ENCODE measurements at regions of chr10 and their contacts with region 1.

Region 1: DNA sequence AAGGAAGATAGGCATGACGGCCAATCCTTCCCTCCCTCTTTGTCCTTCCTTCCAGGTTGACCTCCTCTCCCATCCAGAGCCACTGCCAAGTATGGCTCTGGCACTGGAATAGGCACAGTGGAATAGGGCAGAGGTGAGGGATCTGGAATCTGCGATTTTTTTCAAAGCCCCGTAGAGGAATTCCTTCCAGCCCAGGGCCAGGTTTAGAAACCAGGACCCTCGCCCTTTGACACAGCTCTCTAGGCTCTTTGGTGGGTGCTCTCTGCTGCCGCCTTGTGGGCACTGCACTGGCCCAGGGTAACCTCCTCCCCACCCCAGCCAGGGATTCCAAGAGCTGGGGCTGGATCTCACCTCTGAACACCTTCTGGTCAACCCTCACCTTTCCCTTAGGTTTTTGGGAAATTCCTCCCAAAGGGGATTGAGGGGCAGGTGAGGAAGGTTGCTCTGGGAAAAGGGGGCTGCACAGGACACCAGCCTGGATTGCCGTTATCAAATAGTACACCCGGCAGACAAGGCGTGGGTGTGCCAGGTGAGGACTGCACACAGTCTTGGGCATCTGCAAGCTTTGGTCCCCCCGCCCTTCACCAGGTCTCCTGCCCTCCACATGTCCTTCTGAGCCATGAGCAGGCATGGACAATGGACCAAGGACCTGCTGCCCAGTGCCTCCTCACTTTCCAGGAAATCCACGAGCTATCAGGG is 22.8 kb downstream of the C10orf105 start:
- DNase-seq: peak; percentile 91
- ATAC-seq: peak; percentile 97
- H3K4me3 Mint-ChIP-seq: no peak overlapping the region
- H3K27ac Mint-ChIP-seq: no peak overlapping the region
- H3K4me1 Mint-ChIP-seq: no peaks in the 10 kb centered on the region
- H3K27me3 Mint-ChIP-seq: no peaks in the 10 kb centered on the region; the same call in 1 of the 2 replicates
- CTCF ChIP-seq: peak; percentile 83

Region 2: DNA sequence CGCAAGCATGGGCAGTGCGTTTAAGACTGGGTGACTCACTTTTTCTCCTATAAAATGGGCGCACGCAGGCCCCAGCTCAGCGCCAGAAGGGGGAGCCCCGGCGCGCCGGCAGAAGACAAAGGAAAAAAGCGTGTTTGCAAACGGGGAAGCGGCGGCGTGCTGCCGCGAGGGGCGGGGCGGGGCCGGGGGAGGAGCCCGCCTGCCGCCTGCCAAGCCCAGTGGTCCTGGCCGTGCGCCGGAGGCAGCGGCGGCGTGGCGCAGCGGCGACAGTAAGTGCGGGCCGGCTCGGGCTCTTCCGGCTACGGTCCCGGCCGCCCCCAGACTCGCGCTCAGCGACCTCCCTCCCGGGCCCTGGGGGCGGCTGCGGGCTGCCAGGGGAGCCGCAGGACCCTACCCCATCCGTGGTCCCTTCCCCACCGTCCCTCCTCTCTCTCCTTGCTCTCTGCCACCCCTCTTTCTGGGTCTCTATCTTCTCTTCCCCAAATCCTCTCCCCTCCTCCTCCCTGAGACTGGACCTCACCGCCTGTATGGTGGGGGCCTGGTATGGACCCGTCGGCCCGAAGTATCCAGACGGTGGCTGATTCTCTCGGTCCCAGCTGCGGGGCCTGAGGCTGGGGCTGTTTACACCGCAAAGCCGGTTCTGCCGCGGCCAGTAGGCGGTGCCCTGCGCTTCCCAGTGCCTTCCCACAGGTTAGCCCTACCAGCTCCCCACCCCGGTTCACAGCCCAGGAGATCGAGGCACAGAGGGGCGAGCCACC is 377.6 kb before region 1 on chr10 and contains the start of gene SLC29A3:
- CTCF ChIA-PET with region 1: interaction called, 34 read pairs
- POLR2A ChIA-PET with region 1: no interaction called
- DNase-seq: peak; percentile 85
- ATAC-seq: peak; percentile 90
- H3K4me3 Mint-ChIP-seq: peak within 1 kb of the TSS; percentile 98
- H3K27ac Mint-ChIP-seq: peak within 1 kb of the TSS; percentile 93
- H3K4me1 Mint-ChIP-seq: peaks cover 18% of the 10 kb centered on the region
- H3K27me3 Mint-ChIP-seq: no peaks in the 10 kb centered on the region
- CTCF ChIP-seq: peak; percentile 38
- total RNA-seq, gene SLC29A3: 9.2 to 11.1 TPM (median 11.0 TPM) in 3 replicates

Region 3: GRCh38 chr10:71486484-71487114 is 210.2 kb before region 1 on chr10:
- CTCF ChIA-PET with region 1: interaction called, 11 read pairs
- POLR2A ChIA-PET with region 1: no interaction called
- DNase-seq: peak; percentile 90
- ATAC-seq: peak; percentile 93
- H3K4me3 Mint-ChIP-seq: no peak overlapping the region
- H3K27ac Mint-ChIP-seq: no peak overlapping the region
- H3K4me1 Mint-ChIP-seq: peaks cover 3% of the 10 kb centered on the region; the same call in 1 of the 2 replicates
- H3K27me3 Mint-ChIP-seq: peaks cover 11% of the 10 kb centered on the region
- CTCF ChIP-seq: peak; percentile 82

Region 4: GRCh38 chr10:71547312-71547711 is 149.5 kb before region 1 on chr10:
- CTCF ChIA-PET with region 1: no interaction called
- POLR2A ChIA-PET with region 1: no interaction called
- DNase-seq: no peak
- ATAC-seq: no peak
- H3K4me3 Mint-ChIP-seq: no peak overlapping the region
- H3K27ac Mint-ChIP-seq: no peak overlapping the region
- H3K4me1 Mint-ChIP-seq: peaks cover 57% of the 10 kb centered on the region
- H3K27me3 Mint-ChIP-seq: no peaks in the 10 kb centered on the region
- CTCF ChIP-seq: no peak

Region 5: DNA sequence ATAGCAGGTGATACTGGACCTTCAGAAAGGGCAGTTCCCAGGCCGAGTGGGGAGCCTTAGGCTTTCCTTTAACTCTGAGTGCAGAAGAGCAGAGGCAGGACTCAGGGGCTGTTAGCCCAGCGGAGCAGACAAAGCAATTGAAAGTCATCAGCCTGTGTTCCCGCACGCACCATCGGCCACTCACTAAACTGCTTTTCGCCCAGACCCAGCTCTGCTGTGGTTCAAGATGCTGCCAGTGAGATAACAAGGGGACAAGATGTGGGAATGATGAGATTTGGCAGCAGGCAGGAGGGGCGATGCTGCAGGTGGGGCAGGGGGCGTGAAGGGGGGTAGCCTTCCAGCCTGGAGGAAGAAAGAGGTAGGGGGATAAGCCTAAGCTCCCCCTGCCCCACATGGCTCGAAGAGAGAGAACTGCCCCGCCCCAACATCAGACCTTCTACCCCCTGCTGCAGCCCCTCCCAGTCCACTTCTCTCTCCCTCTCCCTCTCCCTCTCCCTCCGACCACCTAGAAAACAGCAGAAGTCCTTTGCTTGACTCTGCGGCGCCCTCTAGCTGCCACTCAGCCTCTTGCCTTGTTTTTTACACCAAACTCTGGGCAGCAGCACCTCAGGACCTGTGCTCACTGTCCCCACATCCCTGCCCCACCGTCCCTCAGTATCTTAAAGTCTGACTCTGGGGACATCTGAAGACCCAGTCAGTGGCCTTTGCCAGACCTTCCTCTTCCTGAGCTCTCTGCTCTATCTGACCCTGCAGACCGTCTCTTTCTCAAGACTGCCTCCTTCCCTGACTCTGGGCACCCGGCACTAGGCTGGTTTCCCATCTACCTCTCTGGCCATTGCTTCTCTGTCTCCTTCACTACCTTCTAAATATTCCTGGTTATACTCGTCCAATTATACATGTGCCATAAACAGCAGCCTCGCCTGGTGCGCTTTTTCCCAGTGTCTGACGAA is 87.7 kb before region 1 on chr10:
- CTCF ChIA-PET with region 1: interaction called, 16 read pairs
- POLR2A ChIA-PET with region 1: no interaction called
- DNase-seq: peak; percentile 93
- ATAC-seq: peak; percentile 75
- H3K4me3 Mint-ChIP-seq: no peak overlapping the region
- H3K27ac Mint-ChIP-seq: no peak overlapping the region
- H3K4me1 Mint-ChIP-seq: peaks cover 53% of the 10 kb centered on the region
- H3K27me3 Mint-ChIP-seq: no peaks in the 10 kb centered on the region
- CTCF ChIP-seq: peak; percentile 67

Region 6: GRCh38 chr10:71659111-71659634 is 37.6 kb before region 1 on chr10:
- CTCF ChIA-PET with region 1: interaction called, 59 read pairs
- POLR2A ChIA-PET with region 1: interaction called, 3 read pairs
- DNase-seq: no peak
- ATAC-seq: peak; percentile 4; the same call in 1 of the 2 replicates
- H3K4me3 Mint-ChIP-seq: no peak overlapping the region
- H3K27ac Mint-ChIP-seq: no peak overlapping the region
- H3K4me1 Mint-ChIP-seq: peaks cover 80% of the 10 kb centered on the region
- H3K27me3 Mint-ChIP-seq: peaks cover 64% of the 10 kb centered on the region
- CTCF ChIP-seq: no peak

Region 7: DNA sequence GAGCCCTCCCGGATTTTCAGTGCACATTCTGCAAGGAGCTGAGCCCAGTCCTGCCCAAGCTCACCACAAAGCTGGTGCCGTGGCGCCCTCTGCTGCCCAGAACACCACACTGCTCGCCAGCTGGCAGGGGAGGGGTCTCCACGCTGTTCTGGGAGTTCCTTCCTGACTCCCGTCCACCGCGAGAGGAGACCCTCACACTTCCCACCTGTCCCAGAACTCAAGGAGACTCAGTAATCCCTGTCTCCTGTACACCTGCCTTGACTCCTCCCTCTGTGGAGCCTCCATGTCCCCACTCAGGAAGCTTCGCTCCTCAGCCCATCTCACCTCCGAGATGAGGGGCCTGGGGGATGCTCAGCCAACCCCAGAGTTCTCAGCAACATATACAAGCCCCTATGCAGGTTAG is 11.5 kb after region 1 on chr10:
- CTCF ChIA-PET with region 1: interaction called, 158 read pairs
- POLR2A ChIA-PET with region 1: no interaction called
- DNase-seq: peak; percentile 92
- ATAC-seq: peak; percentile 94
- H3K4me3 Mint-ChIP-seq: no peak overlapping the region; the same call in 1 of the 2 replicates
- H3K27ac Mint-ChIP-seq: no peak overlapping the region
- H3K4me1 Mint-ChIP-seq: peaks cover 4% of the 10 kb centered on the region
- H3K27me3 Mint-ChIP-seq: no peaks in the 10 kb centered on the region; the same call in 1 of the 2 replicates
- CTCF ChIP-seq: peak; percentile 84

Region 8: DNA sequence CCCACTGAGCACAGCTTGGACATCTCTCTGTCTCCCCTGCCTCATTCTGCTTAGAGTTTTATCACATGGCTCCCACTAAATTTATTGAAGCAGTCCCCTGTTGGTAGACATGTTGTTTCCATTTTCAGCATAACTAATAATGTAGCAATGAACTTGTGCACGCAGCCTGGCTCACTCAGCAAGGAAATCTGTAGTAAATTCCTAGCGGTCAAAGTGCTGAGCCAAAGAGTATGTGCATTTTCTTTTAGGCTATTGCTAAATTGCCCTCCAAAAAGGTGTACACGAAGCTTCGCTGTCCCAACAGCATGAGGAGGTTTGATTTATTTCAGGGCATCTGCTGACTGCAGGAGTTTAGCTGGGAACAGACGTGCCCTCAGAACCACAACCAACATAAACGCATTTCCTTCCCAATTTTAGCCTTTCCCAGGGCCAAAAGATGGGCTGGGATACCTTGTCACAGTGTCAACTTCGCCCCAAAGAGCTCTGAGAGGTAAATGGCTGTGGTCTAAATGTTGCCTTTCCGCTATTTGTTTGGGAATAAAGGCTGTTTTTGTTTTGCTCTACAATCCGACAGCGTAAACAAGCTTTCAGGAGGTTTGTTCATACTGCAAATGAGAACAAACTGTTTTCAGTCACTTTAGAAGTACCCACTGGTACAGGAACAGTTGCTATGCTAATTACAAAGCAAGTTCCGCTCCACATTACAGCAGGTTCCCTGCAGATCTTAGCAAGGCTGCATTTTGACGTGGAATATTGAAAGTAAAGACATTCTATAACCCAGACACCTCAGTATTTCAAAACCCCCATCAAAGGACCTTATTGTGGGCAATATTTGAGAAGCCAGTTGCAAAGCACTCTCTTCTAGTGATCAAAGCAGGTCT is 59.8 kb after region 1 on chr10:
- CTCF ChIA-PET with region 1: interaction called, 14 read pairs
- POLR2A ChIA-PET with region 1: no interaction called
- DNase-seq: no peak
- ATAC-seq: no peak
- H3K4me3 Mint-ChIP-seq: no peak overlapping the region
- H3K27ac Mint-ChIP-seq: no peak overlapping the region
- H3K4me1 Mint-ChIP-seq: peaks cover 18% of the 10 kb centered on the region
- H3K27me3 Mint-ChIP-seq: no peaks in the 10 kb centered on the region
- CTCF ChIP-seq: no peak

Measured in WTC11 (cell line).